SK-N-SH (cell line): ENCODE measurements at regions of chr1 and their contacts with region 1.

Region 1: GRCh38 chr1:182604169-182605164 is at the start of gene RGS16:
- DNase-seq: peak; percentile 98
- H3K4me3 ChIP-seq: peak within 1 kb of the TSS; percentile 57 to 67
- H3K27ac ChIP-seq: peak within 1 kb of the TSS in 1 of 2 experiments; percentile 63; a peak in 2 of 4 replicates
- H3K4me1 ChIP-seq: peaks cover 0 to 29% of the 10 kb centered on the region in 2 experiments; a peak in 1 of 4 replicates
- H3K27me3 ChIP-seq: no peaks in the 10 kb centered on the region
- CTCF ChIP-seq: no peak
- EP300 ChIP-seq: no peak
- RAD21 ChIP-seq: no peak
- polyA plus RNA-seq, gene RGS16: 0.79 and 1.7 TPM in 2 replicates

Region 2: DNA sequence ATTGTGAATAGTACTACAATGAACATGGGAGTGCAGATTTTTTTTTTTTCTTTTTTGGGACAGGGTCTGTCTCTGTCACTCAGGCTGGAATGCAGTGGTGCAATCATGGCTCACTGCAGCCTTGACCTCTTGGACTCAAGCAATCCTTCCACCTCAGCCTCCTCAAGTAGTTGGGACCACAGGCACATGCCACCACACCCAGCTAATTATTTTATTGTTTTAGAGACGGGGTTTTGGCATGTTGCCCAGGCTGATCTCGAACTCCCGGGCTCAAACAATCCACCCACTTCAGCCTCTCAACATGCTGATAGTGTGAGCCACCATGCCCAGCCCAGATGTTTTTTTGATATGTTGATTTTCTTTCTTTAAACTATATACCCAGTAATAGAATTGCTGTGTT is 96.8 kb before region 1 on chr1:
- CTCF ChIA-PET with region 1: no interaction called
- POLR2A ChIA-PET with region 1: no interaction called
- DNase-seq: no peak
- H3K4me3 ChIP-seq: no peak overlapping the region
- H3K27ac ChIP-seq: no peak overlapping the region
- H3K4me1 ChIP-seq: no peaks in the 10 kb centered on the region
- H3K27me3 ChIP-seq: no peaks in the 10 kb centered on the region
- CTCF ChIP-seq: no peak
- EP300 ChIP-seq: no peak
- RAD21 ChIP-seq: no peak

Region 3: GRCh38 chr1:182588500-182589452 is 15.7 kb before region 1 on chr1 and contains the start of gene RNASEL:
- CTCF ChIA-PET with region 1: interaction called, 41 read pairs
- POLR2A ChIA-PET with region 1: no interaction called
- DNase-seq: no peak
- H3K4me3 ChIP-seq: no peak within 1 kb of the TSS
- H3K27ac ChIP-seq: no peak within 1 kb of the TSS
- H3K4me1 ChIP-seq: no peaks in the 10 kb centered on the region
- H3K27me3 ChIP-seq: no peaks in the 10 kb centered on the region; the same call in 1 of the 2 replicates
- CTCF ChIP-seq: no peak
- EP300 ChIP-seq: no peak
- RAD21 ChIP-seq: no peak
- polyA plus RNA-seq, gene RNASEL: not detected in 2 replicates

Region 4: GRCh38 chr1:182633672-182634176 is 29.3 kb after region 1 on chr1:
- CTCF ChIA-PET with region 1: interaction called, 19 read pairs
- POLR2A ChIA-PET with region 1: no interaction called
- DNase-seq: peak; percentile 52
- H3K4me3 ChIP-seq: no peak overlapping the region
- H3K27ac ChIP-seq: peak overlapping the region in 1 of 2 experiments; percentile 44; a peak in 2 of 4 replicates
- H3K4me1 ChIP-seq: peaks cover 0 to 31% of the 10 kb centered on the region in 2 experiments; a peak in 1 of 4 replicates
- H3K27me3 ChIP-seq: no peaks in the 10 kb centered on the region; the same call in 1 of the 2 replicates
- CTCF ChIP-seq: no peak
- EP300 ChIP-seq: peak in 1 of 2 experiments; percentile 83; a peak in 1 of 4 replicates
- RAD21 ChIP-seq: peak; percentile 14; the same call in 1 of the 2 replicates

Region 5: GRCh38 chr1:182677397-182678098 is 73.1 kb after region 1 on chr1:
- CTCF ChIA-PET with region 1: interaction called, 12 read pairs
- POLR2A ChIA-PET with region 1: no interaction called
- DNase-seq: no peak
- H3K4me3 ChIP-seq: no peak overlapping the region
- H3K27ac ChIP-seq: no peak overlapping the region
- H3K4me1 ChIP-seq: peaks cover 2 to 6% of the 10 kb centered on the region in 2 experiments; a peak in 2 of 4 replicates
- H3K27me3 ChIP-seq: peaks cover 5% of the 10 kb centered on the region; the same call in 1 of the 2 replicates
- CTCF ChIP-seq: no peak
- EP300 ChIP-seq: no peak
- RAD21 ChIP-seq: no peak

Region 6: GRCh38 chr1:182768963-182769362 is 164.5 kb after region 1 on chr1:
- CTCF ChIA-PET with region 1: interaction called, 15 read pairs
- POLR2A ChIA-PET with region 1: no interaction called
- DNase-seq: no peak
- H3K4me3 ChIP-seq: no peak overlapping the region
- H3K27ac ChIP-seq: no peak overlapping the region
- H3K4me1 ChIP-seq: peaks cover 0 to 18% of the 10 kb centered on the region in 2 experiments; a peak in 2 of 4 replicates
- H3K27me3 ChIP-seq: no peaks in the 10 kb centered on the region
- CTCF ChIP-seq: no peak
- EP300 ChIP-seq: no peak
- RAD21 ChIP-seq: no peak